CD8-positive, alpha-beta T cell (primary cell): ENCODE measurements at regions of chr11 and their contacts with region 1.

Region 1: DNA sequence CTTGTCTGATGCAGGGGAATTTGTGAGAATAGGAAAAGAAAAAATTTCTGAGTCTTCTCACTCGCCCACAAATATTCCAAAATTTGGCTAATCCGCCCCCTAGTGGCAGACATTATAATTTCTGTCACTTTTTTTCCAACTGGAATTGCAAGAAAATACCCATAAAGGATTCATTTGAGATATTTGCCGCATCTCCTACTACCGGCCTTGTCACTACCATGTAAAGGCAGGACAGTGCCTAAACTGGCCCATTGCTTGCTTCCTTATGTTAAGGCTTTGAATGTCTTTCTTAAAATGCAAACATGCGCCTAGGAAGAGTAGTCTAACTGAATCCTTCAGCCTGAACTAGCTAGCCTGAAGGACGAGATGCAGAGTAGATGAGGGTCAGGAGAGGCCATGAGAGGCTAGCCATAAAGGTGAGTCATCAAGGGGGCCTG is 9.3 kb upstream of the CEP295 start:
- DNase-seq: peak in 6 of 9 experiments; percentile 7 to 53 (median 40)
- ATAC-seq: no peak
- H3K4me3 ChIP-seq: no peak overlapping the region
- H3K4me3 Mint-ChIP-seq: no peak overlapping the region
- H3K27ac ChIP-seq: no peak overlapping the region
- H3K27ac Mint-ChIP-seq: no peak overlapping the region
- H3K4me1 ChIP-seq: no peaks in the 10 kb centered on the region
- H3K4me1 Mint-ChIP-seq: peaks cover 5% of the 10 kb centered on the region
- H3K27me3 ChIP-seq: peaks cover 0 to 2% of the 10 kb centered on the region in 2 experiments
- H3K27me3 Mint-ChIP-seq: peaks cover 8% of the 10 kb centered on the region
- CTCF ChIP-seq: peak; percentile 88

Region 2: GRCh38 chr11:92941676-92942571 is 710.3 kb before region 1 on chr11:
- CTCF ChIA-PET with region 1: no interaction called
- POLR2A ChIA-PET with region 1: no interaction called
- intact Hi-C with region 1: loop called in 1 of 2 experiments (anchors 10 kb)
- DNase-seq: peak in 2 of 9 experiments; percentile 10 to 22
- ATAC-seq: no peak
- H3K4me3 ChIP-seq: no peak overlapping the region
- H3K4me3 Mint-ChIP-seq: no peak overlapping the region
- H3K27ac ChIP-seq: no peak overlapping the region
- H3K27ac Mint-ChIP-seq: no peak overlapping the region
- H3K4me1 ChIP-seq: no peaks in the 10 kb centered on the region
- H3K4me1 Mint-ChIP-seq: no peaks in the 10 kb centered on the region
- H3K27me3 ChIP-seq: no peaks in the 10 kb centered on the region
- H3K27me3 Mint-ChIP-seq: peaks cover 5% of the 10 kb centered on the region
- CTCF ChIP-seq: peak; percentile 30

Region 3: GRCh38 chr11:93234602-93235207 is 417.5 kb before region 1 on chr11:
- CTCF ChIA-PET with region 1: interaction called, 52 read pairs
- POLR2A ChIA-PET with region 1: no interaction called
- intact Hi-C with region 1: loop called (anchors 1 kb)
- DNase-seq: peak; percentile 22 to 72 (median 59)
- ATAC-seq: peak; percentile 89
- H3K4me3 ChIP-seq: no peak overlapping the region
- H3K4me3 Mint-ChIP-seq: no peak overlapping the region
- H3K27ac ChIP-seq: no peak overlapping the region
- H3K27ac Mint-ChIP-seq: no peak overlapping the region
- H3K4me1 ChIP-seq: no peaks in the 10 kb centered on the region
- H3K4me1 Mint-ChIP-seq: no peaks in the 10 kb centered on the region
- H3K27me3 ChIP-seq: no peaks in the 10 kb centered on the region
- H3K27me3 Mint-ChIP-seq: peaks cover 20% of the 10 kb centered on the region
- CTCF ChIP-seq: peak; percentile 66